WTC11 (cell line): ENCODE measurements at regions of chr19 and their contacts with region 1.

Region 1: DNA sequence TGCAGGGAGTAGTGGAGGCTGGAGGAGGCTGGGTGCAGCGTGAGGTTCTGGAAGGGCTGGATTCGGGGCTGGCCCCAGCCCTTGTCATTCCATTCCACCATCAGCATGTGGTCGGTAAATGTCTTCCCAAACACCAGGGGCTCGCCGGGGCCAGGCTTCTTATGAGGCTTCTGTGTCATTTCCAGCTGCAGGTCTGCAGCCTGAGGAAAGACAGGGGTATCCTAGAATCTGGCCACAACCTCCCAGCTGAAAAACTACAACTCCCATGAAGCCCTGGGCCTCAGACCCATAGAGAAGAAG is 4.4 kb downstream of the BCAT2 start:
- DNase-seq: peak; percentile 76
- ATAC-seq: no peak
- H3K4me3 Mint-ChIP-seq: peak overlapping the region; percentile 36; the same call in 1 of the 2 replicates
- H3K27ac Mint-ChIP-seq: peak overlapping the region; percentile 79; the same call in 1 of the 2 replicates
- H3K4me1 Mint-ChIP-seq: peaks cover 32% of the 10 kb centered on the region
- H3K27me3 Mint-ChIP-seq: peaks cover 17% of the 10 kb centered on the region
- CTCF ChIP-seq: no peak

Region 2: DNA sequence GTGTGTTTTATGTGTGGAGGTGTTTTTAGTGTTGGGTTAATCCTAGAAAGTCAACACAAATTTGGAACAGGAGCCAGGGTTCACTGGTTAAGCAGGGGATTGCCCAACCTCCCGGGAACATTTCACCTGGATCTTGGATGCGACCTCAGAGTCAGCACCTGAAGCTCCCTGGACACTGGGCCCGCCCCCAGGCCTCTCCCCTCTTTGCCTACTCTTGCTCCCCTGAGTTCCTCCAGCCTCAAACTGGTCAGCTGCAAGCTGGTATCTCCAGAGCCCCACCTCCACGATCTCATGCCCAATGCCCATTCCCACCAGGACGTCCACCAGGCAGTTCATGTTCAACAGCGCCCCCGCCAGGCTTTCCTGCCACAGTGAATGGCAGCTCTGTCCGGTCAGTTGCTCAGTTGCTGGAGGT is 20.1 kb after region 1 on chr19:
- CTCF ChIA-PET with region 1: interaction called, 30 read pairs
- POLR2A ChIA-PET with region 1: interaction called, 3 read pairs
- DNase-seq: peak; percentile 75
- ATAC-seq: peak; percentile 75
- H3K4me3 Mint-ChIP-seq: no peak overlapping the region
- H3K27ac Mint-ChIP-seq: no peak overlapping the region
- H3K4me1 Mint-ChIP-seq: no peaks in the 10 kb centered on the region
- H3K27me3 Mint-ChIP-seq: no peaks in the 10 kb centered on the region; the same call in 1 of the 2 replicates
- CTCF ChIP-seq: peak; percentile 43

Region 3: GRCh38 chr19:48835734-48836088 is 29.2 kb after region 1 on chr19:
- CTCF ChIA-PET with region 1: interaction called, 12 read pairs
- POLR2A ChIA-PET with region 1: interaction called, 3 read pairs
- DNase-seq: peak; percentile 98
- ATAC-seq: peak; percentile 68
- H3K4me3 Mint-ChIP-seq: peak overlapping the region; percentile 94
- H3K27ac Mint-ChIP-seq: peak overlapping the region; percentile 98
- H3K4me1 Mint-ChIP-seq: peaks cover 19% of the 10 kb centered on the region
- H3K27me3 Mint-ChIP-seq: no peaks in the 10 kb centered on the region
- CTCF ChIP-seq: peak; percentile 84

Region 4: GRCh38 chr19:48982280-48982679 is 175.8 kb after region 1 on chr19:
- CTCF ChIA-PET with region 1: no interaction called
- POLR2A ChIA-PET with region 1: no interaction called
- DNase-seq: no peak
- ATAC-seq: peak; percentile 49
- H3K4me3 Mint-ChIP-seq: no peak overlapping the region
- H3K27ac Mint-ChIP-seq: no peak overlapping the region
- H3K4me1 Mint-ChIP-seq: no peaks in the 10 kb centered on the region
- H3K27me3 Mint-ChIP-seq: no peaks in the 10 kb centered on the region
- CTCF ChIP-seq: no peak